HEK293 (cell line): ENCODE measurements at regions of chr12 and their contacts with region 1.

Region 1: DNA sequence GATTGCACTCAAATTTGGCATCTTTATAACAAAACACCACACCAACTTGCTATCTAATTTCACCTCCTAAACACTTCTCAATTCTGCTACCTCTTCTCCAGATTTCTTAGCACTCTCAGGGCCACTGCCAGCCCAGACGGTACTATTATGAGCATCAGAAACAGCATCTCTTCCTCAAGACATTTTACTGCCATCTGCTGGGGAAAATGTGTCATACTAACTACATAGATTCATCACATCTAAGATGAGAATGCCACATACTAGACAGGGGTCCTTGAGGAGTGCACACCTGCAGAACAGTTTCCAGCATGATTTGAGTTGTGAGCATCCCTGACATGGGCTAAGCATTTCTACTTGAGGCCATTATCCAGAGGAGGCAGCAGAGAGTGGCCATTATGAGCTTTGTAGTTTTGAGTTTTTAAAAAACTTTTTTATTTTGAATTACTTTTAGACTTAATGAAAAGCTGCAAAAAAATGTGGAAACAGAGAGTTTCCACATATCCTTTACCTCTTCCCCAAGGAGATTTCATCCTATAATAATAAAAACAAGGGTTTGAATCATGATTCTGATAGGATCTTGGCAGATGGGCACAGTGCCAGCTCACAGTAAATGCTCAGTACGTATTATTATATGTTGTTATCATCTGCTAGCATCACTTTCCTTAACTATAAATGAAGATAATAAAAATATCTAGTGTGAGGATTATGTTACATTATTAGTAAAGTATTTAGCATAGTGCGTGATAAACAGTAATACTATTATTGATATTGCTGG is 15.2 kb upstream of the GRIP1 start:
- H3K4me3 ChIP-seq: no peak overlapping the region
- H3K27ac ChIP-seq: no peak overlapping the region
- H3K4me1 ChIP-seq: no peaks in the 10 kb centered on the region; the same call in 1 of the 2 replicates
- CTCF ChIP-seq: peak; percentile 49; the same call in 1 of the 2 replicates

Region 2: DNA sequence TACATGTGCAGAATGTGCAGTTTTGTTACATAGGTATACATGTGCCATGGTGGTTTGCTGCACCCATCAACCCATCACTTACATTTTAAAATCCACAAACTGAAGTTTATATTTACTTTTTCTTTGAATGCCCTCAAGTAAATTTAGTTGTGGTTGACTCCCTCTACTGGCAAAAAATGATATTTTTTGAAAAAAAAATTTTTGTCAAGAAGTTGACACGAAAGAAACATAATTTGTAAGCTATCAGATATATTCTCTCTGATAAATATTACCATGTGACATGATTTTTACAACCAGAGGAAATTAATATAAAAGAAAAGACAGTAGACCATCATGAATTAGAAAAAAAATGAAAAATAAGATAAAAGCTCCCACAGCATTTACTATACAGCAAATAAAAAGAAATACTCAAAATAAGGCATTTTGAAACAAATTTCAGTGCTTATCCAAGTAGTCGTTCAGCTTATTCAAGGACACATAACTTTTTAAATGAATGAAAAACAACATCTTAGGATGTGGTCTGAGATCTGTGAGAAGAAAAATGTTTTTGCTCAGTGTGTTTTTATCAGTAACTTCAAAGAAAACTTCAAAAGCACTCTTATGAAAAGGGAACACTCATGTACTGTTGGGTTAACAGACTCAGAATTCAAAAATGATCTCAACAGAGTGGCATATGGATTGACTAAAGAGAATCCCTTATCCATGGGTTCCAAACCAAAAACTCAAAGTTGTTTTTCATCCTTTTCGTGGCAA is 14.8 kb after region 1 on chr12:
- CTCF ChIA-PET with region 1: interaction called, 16 read pairs
- POLR2A ChIA-PET with region 1: no interaction called
- H3K4me3 ChIP-seq: no peak overlapping the region
- H3K27ac ChIP-seq: no peak overlapping the region
- H3K4me1 ChIP-seq: peaks cover 9% of the 10 kb centered on the region; the same call in 1 of the 2 replicates
- CTCF ChIP-seq: no peak